Dorsolateral prefrontal cortex (tissue), 120 donors: ENCODE measurements at regions of chr1 and their contacts with region 1.

Region 1: GRCh38 chr1:31394628-31395193 is 18.3 kb upstream of the SERINC2 start:
- DNase-seq: peak; percentile 70 to 87 (median 82)
- H3K4me3 ChIP-seq: peak overlapping the region; percentile 18 to 72 (median 50)
- H3K27ac ChIP-seq: peak overlapping the region in 4 of 59 donors; percentile 3 to 67 (median 34)
- H3K27me3 ChIP-seq: no peaks in the 10 kb centered on the region
- CTCF ChIP-seq: peak; percentile 38 to 95 (median 88)

Region 2: GRCh38 chr1:31548907-31549808 is 154.4 kb after region 1 on chr1:
- intact Hi-C with region 1: loop called in 1 of 2 experiments (anchors 10 kb)
- DNase-seq: peak; percentile 69 to 94 (median 80)
- H3K4me3 ChIP-seq: peak overlapping the region in 44 of 59 donors; percentile 0 to 54 (median 34)
- H3K27ac ChIP-seq: peak overlapping the region in 23 of 59 donors; percentile 3 to 76 (median 39)
- H3K27me3 ChIP-seq: peaks cover 0 to 3% (median 0%) of the 10 kb centered on the region in 45 donors
- CTCF ChIP-seq: peak; percentile 80 to 98 (median 94)